Left cardiac atrium (tissue), 4 donors: ENCODE measurements at regions of chr5 and their contacts with region 1.

Region 1: GRCh38 chr5:90474235-90475109 is at the starts of genes MBLAC2 and POLR3G:
- DNase-seq: peak; percentile 93
- ATAC-seq: peak; percentile 98
- total RNA-seq, gene MBLAC2: 3.2 to 3.4 TPM
- total RNA-seq, gene POLR3G: 1.0 to 1.2 TPM

Region 2: GRCh38 chr5:89855417-89855816 is 619.1 kb before region 1 on chr5:
- intact Hi-C with region 1: no loop called
- DNase-seq: no peak
- ATAC-seq: no peak

Region 3: DNA sequence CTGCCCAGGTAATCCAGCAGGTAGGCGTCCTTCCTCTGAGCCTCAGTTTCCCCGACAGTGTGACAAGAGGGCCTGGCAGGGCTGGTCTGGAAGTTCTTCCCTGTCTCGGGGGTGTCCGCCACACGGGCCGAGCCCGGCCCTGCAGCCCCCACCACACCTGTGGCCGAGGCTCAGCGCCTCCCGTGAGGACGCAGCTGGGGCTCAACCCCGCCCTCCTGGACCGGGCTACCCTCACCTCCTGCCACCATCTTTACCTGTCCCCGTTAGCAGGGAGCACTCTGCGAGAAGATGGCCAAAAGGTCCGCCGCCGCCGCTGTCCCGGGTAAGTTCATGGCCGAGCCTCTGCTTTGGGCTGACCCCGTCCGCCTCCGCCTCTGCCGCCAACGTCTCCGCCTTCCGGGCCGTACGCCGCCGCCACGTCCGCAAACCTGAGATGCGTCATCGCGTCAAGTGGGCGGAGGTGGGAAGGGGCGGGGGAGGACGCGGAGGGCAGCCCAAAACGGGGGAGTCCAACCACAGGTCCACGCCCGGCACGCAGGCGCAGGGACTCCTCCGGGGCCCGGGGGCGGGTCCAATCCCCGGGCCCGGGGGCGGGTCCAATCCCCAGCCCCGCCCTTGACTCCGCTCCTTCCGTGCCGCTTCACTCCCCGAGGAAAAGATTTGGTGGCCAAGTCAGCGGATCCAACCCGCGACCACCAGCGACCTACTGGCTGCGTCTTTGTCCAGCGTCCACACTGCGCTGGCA is 54.9 kb after region 1 on chr5 and contains the start of gene LYSMD3:
- intact Hi-C with region 1: loop called in 1 of 2 experiments (anchors 2 kb)
- DNase-seq: peak; percentile 98
- ATAC-seq: peak; percentile 99 to 100
- total RNA-seq, gene LYSMD3: 17.3 to 30.0 TPM

Region 4: DNA sequence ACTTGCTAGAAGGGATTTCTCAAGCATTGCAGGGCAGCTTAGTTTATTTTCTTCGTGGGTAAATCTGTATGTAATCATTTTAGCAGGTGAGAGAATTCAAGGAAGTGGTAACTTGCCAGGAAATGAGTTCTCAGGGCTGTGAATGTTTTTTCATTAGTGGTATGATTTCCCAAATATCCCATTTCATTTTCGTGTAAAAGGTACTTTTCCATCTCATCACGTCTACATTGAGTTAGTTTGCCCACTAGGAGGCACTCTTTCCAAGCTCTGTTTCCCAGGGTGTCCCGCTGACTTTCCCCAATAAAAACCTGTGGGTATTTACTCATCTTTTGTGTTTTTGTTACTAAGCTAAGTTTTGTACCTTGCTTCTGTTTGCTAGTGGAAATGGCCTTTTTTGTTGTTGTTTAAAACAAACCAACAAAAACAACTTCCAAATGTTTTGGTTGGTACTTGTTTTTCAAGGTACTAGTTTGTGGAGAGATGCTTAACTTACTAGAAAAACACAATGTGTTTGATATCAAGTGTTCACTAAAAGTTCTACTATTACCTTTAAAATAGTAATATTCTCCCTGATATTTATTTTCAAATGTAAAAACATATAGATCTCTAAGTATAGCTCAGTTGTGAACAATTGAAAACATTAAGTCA is 457.7 kb after region 1 on chr5:
- intact Hi-C with region 1: no loop called
- DNase-seq: peak; percentile 24
- ATAC-seq: peak; percentile 78 to 82